Activated CD8-positive, alpha-beta memory T cell treated with anti-CD3 and anti-CD28 coated beads, Interleukin-2, amount 10 ng/mL, durations not matched to agents 7 days and 5 days (primary cell): ENCODE measurements at regions of chr12 and their contacts with region 1.

Region 1: DNA sequence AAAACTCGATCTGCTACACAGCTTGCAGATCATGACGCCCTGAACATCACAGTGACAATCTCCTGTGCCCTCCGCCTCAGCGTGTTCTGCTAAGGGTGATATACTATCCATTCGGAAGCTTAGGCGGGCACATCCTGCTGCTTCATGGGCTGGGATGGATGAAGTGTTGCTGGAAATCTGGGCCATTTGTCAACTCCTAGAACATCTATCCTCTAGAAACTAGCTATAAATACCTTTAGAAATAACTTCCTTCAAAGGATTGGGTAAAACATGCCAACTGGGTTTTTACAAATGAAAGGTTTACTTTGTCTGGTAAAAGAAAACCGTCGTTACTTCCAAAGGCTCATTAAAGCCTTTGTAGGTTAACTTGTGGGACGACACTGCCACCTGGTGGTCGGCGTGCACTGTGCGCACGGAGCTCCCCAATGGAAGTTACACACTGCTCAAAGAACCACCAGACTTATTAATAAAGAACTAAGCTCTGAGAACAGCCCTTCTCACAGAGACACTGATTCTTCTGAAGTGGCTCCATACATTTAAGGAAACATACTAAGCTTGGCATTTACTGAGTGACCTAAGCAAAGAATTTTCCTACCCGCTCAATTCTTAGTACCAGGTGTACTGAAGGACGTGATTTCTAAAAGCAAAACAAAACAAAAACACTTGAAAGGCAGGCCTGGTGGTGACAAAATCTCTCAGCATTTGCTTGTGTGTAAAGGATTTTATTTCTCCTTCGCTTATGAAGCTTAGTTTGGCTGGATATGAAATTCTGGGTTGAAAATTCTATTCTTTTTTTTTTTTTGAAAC is 21.6 kb upstream of the CACNA2D4 start:
- DNase-seq: peak; percentile 91
- ATAC-seq: peak; percentile 98
- H3K4me3 Mint-ChIP-seq: no peak overlapping the region
- H3K27ac Mint-ChIP-seq: no peak overlapping the region
- H3K4me1 Mint-ChIP-seq: peaks cover 2% of the 10 kb centered on the region
- H3K27me3 Mint-ChIP-seq: no peaks in the 10 kb centered on the region

Region 2: DNA sequence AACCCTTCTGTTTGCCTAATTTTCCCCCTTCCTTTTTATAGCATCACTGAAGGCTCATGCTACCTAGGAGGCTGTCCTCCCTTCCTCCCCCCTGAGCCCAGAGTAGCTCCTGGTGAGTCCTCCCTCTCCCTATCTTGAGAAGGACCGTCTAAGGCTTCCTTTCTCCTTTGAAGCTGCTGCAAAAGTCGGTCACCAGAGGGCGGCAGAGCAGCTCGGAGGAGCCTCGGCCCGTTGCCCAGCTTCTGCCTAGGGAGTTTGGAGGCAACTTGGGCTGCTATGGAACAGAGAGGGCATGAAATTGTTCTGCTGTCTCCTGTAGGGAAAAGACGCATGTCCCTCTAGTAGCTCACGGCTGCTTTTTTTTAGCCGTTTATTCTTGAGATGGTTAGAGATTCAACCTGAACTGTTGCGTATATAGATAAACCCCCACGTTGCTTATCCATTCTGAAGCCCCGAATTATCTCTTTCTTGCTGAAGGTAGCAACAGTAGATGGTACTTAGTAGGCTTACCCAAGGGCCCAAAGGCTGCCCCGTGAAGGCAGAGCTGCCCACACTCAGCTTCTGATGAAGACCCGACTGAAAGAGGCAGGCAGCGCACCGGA is 305.3 kb before region 1 on chr12:
- CTCF ChIA-PET with region 1: interaction called, 22 read pairs
- DNase-seq: peak; percentile 71
- ATAC-seq: peak; percentile 77
- H3K4me3 Mint-ChIP-seq: no peak overlapping the region
- H3K27ac Mint-ChIP-seq: no peak overlapping the region
- H3K4me1 Mint-ChIP-seq: peaks cover 6% of the 10 kb centered on the region
- H3K27me3 Mint-ChIP-seq: peaks cover 61% of the 10 kb centered on the region

Region 3: DNA sequence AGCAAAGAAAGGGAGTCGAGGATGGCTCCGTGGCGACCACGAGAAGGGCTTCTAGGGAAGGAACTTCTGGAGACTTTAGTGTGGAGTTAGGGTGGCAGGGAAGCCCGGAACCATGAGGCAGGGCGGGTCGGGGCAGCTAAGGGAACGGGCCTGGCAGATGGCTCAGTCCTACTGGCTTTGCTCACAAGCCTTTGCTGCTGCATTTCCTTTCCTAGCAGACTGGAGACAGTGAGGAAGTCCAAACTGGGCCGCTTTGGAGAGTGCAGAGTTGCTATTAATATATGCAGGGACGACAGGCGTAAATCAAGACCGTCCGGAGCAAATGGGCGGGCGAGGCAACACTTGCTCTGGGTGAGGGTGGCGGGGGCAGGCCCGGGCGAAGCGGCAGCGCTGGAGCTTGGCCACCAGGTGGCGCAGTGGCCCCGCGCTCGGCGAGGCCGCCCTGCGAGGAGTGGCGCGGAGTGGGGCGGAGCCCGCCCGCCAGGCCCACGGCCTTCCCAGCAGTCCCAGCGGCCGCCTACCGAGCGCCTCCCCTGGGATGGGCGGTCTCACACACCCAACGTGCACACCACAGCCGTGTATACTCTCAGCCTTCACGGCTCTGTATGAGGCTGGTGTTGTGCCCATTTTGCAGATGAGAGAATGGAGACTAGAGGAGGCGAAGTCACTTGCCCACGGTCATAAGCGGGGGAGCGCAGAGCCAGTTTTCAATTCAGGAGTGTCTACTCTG is 144.1 kb before region 1 on chr12:
- CTCF ChIA-PET with region 1: interaction called, 162 read pairs
- DNase-seq: peak; percentile 95
- ATAC-seq: peak; percentile 97
- H3K4me3 Mint-ChIP-seq: peak overlapping the region; percentile 84
- H3K27ac Mint-ChIP-seq: peak overlapping the region; percentile 87
- H3K4me1 Mint-ChIP-seq: peaks cover 18% of the 10 kb centered on the region
- H3K27me3 Mint-ChIP-seq: no peaks in the 10 kb centered on the region

Region 4: GRCh38 chr12:1920971-1921370 is 19.0 kb before region 1 on chr12:
- CTCF ChIA-PET with region 1: interaction called, 19 read pairs
- DNase-seq: peak; percentile 34
- ATAC-seq: no peak
- H3K4me3 Mint-ChIP-seq: no peak overlapping the region
- H3K27ac Mint-ChIP-seq: no peak overlapping the region
- H3K4me1 Mint-ChIP-seq: peaks cover 12% of the 10 kb centered on the region
- H3K27me3 Mint-ChIP-seq: peaks cover 15% of the 10 kb centered on the region

Region 5: GRCh38 chr12:1956716-1957115 is 16.7 kb after region 1 on chr12:
- CTCF ChIA-PET with region 1: interaction called, 31 read pairs
- DNase-seq: no peak
- ATAC-seq: no peak
- H3K4me3 Mint-ChIP-seq: no peak overlapping the region
- H3K27ac Mint-ChIP-seq: no peak overlapping the region
- H3K4me1 Mint-ChIP-seq: no peaks in the 10 kb centered on the region
- H3K27me3 Mint-ChIP-seq: no peaks in the 10 kb centered on the region

Region 6: DNA sequence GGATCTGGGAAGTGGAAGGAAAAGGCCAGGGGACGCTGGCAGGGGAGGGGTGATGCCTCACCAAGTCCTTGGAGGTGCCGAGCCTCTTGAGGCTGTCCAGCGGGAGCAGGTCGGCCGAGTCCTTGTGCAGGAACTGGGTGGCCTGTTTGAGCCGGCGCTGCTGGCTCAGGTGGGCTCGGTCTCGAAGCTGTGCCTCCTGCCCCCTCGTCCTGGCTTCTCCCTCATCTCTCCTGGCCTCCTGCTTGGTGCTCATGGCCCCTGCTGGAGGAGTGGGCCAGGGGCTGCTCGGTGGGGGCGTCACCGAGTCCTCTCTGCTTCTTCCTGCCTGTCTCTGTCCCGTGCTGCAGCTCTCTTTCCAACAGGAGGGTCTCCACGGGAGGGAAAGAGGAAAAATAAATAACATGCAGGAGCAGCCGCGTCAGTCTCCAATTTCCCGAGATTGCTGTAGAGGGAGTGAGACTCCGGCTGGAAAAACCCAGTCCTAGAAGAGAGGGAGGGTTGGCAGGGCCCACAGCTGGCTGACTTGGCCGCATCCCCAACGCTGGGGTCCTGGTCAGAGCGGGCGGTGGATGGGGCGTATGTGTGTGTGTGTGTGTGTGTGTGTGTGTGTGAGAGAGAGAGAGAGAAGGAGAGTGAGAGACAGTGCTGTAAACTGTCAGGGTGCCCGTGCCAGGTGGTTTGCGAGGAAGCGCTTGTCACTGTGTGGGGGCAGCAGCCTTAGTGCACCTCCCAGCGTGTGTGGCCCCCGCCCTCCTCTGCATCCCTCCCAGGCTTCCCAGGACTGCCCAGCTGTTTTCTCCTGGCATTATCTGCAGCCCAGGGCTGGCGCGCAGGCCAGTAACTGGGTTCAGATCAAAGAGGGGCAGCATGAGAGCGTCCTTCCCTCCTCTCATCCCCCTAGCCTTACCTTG is 894.8 kb after region 1 on chr12 and contains the start of gene NRIP2:
- CTCF ChIA-PET with region 1: no interaction called
- DNase-seq: no peak
- ATAC-seq: no peak
- H3K4me3 Mint-ChIP-seq: no peak within 1 kb of the TSS
- H3K27ac Mint-ChIP-seq: no peak within 1 kb of the TSS
- H3K4me1 Mint-ChIP-seq: no peaks in the 10 kb centered on the region
- H3K27me3 Mint-ChIP-seq: no peaks in the 10 kb centered on the region
- total RNA-seq, gene NRIP2: not detected